GM13976 (cell line): ENCODE measurements at regions of chr3 and their contacts with region 1.

Region 1: GRCh38 chr3:168162172-168162571 is 66.4 kb upstream of the GOLIM4 start:
- DNase-seq: no peak
- CTCF ChIP-seq: no peak

Region 2: DNA sequence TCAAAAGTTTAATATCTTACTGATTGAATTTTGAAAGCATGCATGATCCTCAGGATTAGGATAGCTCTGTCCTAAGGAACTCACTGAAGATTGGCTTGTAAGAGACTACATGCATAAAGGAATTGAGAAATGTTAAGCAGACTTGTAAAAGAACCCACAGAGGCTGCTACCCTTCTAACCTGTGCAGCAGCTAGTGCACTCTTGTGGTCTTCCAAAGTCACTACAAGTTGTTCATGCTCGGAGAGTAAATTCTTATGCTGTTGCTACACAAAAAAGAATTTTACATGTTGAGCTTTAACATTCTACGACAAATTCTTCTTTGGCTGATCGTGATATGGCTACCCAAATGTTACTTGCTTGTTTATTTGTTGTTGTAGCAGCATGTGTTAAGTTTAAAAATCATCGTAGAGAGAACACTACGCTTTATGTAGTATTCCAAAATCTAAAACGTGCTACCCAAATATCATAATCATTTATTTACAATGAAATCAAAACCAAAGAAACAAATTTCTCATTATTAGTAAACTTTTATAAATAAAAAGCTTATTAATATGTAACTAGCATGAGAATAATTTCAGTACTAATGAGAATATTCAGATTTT is 121.5 kb before region 1 on chr3:
- in situ Hi-C with region 1: loop called (anchors 5 kb)
- DNase-seq: no peak
- CTCF ChIP-seq: peak; percentile 23

Region 3: GRCh38 chr3:168260859-168261258 is 98.7 kb after region 1 on chr3:
- in situ Hi-C with region 1: no loop called
- DNase-seq: no peak
- CTCF ChIP-seq: no peak

Region 4: DNA sequence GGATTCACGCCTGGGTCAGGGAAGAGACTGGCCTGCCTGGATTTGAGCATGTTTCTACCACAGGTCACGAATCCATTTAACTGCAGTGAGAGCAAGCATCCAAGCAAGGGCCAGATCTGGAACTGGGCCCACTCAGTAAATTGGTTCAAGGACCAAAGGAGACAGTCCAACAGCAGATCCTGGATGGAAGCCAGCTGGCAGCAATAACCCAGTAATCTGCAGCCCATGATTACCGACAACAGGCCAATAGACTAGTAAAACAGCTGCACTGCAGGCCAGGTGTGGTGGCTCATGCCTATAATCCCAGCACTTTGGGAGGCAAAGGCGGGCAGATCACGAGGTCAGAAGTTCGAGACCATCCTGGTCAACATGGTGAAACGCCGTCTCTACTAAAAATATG is 1761.0 kb after region 1 on chr3:
- in situ Hi-C with region 1: no loop called
- DNase-seq: no peak
- CTCF ChIP-seq: no peak